ENCODE measurements at regions of chr7 and their contacts with region 1.

Region 1: GRCh38 chr7:130941322-130942210 is 207.6 kb upstream of the KLF14 start:
- DNase-seq: peak; percentile 84 to 90 (median 85)
- ATAC-seq: peak; percentile 73 to 89 (median 84)
- H3K4me3 ChIP-seq: peak overlapping the region; percentile 28 to 60 (median 57)
- H3K27ac ChIP-seq: peak overlapping the region; percentile 92 to 99 (median 97)
- H3K4me1 ChIP-seq: peaks cover 0 to 45% (median 13%) of the 10 kb centered on the region in 4 donors
- H3K27me3 ChIP-seq: no peaks in the 10 kb centered on the region
- CTCF ChIP-seq: no peak
- POLR2A ChIP-seq: peak; percentile 69

Region 2: DNA sequence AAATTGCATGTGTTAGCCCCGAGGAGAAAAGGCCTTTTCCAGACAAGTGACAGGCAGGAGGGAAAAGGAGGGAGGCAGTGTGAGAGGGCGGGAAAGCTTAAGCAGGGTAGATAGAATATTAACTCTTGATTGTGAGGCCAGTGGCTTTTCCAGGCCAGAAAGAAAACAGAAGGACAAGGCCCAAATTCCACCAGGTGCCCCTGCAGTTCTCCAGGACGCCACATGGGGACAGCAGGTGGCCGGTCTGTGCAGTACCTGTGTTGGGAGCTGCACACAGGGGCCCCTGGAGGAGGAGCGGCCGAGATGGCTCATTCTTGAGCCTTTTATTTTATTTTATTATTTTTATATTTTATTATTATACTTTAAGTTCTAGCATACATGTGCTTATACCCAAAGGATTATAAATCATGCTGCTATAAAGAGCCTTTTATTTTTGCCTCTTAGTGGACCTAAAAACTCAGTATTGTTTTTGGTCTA is 66.3 kb before region 1 on chr7:
- intact Hi-C with region 1: no loop called
- DNase-seq: peak; percentile 60 to 71 (median 66)
- ATAC-seq: peak; percentile 87 to 96 (median 92)
- H3K4me3 ChIP-seq: no peak overlapping the region
- H3K27ac ChIP-seq: no peak overlapping the region
- H3K4me1 ChIP-seq: no peaks in the 10 kb centered on the region
- H3K27me3 ChIP-seq: no peaks in the 10 kb centered on the region
- CTCF ChIP-seq: peak; percentile 83 to 89 (median 86)
- POLR2A ChIP-seq: no peak

Region 3: GRCh38 chr7:130996841-130997231 is 55.3 kb after region 1 on chr7:
- intact Hi-C with region 1: loop called in 1 of 2 experiments (anchors 10 kb)
- DNase-seq: no peak
- ATAC-seq: peak; percentile 40 to 60 (median 58)
- H3K4me3 ChIP-seq: no peak overlapping the region
- H3K27ac ChIP-seq: peak overlapping the region; percentile 40 to 90 (median 83)
- H3K4me1 ChIP-seq: peaks cover 0 to 48% (median 22%) of the 10 kb centered on the region in 4 donors
- H3K27me3 ChIP-seq: no peaks in the 10 kb centered on the region
- CTCF ChIP-seq: no peak
- POLR2A ChIP-seq: no peak

Region 4: DNA sequence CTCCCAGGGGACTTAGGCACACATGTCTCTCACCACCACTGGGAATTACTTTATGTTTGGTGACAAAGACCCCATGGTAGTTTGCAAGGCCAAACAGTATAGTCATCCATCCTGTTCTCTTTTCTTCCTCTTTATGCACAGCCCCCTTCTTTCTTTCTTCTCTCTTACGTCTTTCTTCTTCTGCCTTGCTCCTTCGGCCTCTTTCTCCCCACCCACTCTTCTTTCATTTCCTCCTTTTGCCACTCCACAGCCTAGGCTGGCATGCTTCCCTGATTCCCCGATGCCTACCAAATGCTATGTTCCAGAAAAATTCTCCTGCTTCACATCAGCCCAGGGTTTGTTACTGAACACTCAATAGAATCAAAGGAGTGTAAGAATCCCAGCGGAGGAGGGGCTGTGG is 323.7 kb after region 1 on chr7:
- intact Hi-C with region 1: no loop called
- DNase-seq: no peak
- ATAC-seq: peak in 2 of 4 donors; percentile 18 to 19
- H3K4me3 ChIP-seq: no peak overlapping the region
- H3K27ac ChIP-seq: no peak overlapping the region
- H3K4me1 ChIP-seq: no peaks in the 10 kb centered on the region
- H3K27me3 ChIP-seq: no peaks in the 10 kb centered on the region
- CTCF ChIP-seq: no peak
- POLR2A ChIP-seq: no peak